Gastrocnemius medialis (tissue), 4 donors: ENCODE measurements at regions of chr7 and their contacts with region 1.

Region 1: DNA sequence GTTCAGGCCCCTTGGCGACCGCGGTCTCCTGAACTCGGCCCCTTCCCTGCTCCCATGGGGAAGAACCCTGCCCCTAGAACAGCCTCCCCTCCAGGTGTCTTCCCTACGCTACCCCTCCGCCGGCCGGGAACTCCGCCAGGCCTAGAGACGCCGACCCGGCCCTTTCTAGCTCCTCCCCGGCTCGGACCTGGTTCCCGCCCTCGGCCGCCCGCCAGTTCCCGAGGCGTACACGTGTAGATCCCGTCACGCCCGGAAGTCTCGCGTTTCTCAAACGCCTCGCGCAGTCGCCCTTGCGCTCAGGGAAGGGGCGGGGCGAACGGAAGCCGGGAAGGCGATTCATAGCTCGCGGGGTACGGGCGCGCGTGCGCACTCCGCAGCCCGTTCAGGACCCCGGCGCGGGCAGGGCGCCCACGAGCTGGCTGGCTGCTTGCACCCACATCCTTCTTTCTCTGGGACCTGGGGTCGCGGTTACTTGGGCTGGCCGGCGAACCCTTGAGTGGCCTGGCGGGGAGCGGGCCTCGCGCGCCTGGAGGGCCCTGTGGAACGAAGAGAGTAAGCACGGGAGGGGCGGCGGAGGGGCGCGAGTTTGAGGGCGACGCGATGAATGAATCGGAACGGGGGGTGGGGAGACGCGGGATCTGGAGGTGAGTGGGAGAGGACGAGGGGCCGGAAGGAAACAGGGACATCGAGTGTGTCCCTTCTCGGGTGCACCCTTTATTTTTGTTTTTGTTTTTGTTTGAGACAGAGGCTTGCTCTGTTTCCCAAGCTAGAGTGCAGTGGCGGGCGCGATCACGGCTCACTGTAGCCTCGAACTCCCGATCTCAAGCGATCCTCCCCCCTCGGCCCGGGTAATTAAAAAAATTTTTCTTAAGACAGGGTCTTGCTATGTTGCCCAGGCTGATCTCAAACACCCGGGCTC is at the start of gene POP7:
- DNase-seq: peak; percentile 97 to 98
- ATAC-seq: peak; percentile 98
- H3K4me3 ChIP-seq: peak within 1 kb of the TSS; percentile 92 to 97 (median 96)
- H3K27ac ChIP-seq: peak within 1 kb of the TSS; percentile 92 to 98 (median 93)
- H3K4me1 ChIP-seq: peaks cover 14 to 17% of the 10 kb centered on the region in 2 donors
- H3K27me3 ChIP-seq: no peaks in the 10 kb centered on the region
- CTCF ChIP-seq: no peak
- POLR2A ChIP-seq: peak; percentile 58 to 60
- total RNA-seq, gene POP7: 39.8 to 76.3 (median 63.0) TPM

Region 2: DNA sequence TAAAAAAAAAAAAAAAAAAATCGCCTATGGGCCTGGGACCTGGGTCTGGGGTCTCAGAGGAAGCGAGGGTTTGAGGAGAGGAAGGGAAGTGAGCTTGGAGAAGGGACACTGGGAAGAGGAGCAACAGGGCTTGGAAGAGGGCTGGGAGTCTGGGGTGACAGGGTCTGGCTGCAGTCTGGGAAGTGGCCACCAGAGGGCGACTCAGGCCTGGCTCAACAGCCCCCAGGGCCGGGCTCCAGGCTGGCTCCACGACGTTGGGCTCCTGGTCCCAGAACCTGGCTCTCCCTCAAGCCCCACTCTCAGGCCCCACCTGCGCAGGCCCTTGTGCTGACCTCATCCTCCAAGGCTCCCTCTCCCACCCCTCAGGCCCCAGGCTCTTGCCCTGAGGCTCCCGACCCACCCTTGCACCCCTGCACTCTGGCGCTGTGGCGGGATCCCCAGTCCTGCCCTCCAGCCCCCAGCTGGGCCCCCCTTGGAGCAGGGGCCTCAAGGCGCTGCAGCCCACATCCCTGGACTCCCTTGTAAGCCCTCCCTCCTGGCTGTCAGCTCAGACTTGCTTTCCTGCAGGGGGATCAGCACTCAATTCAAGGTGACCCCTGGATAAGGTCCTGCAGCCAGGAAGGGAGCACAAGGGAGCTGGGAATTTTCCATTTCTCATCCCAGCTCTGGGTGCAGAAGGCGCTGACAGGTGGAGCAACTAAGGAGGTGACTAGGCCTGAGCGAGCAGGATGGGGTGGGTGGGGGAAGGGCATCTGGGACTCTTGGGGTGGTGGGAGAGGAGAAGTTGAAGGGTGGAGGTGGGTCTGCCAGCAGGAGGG is 236.6 kb before region 1 on chr7:
- in situ Hi-C with region 1: loop called in 1 of 4 experiments (anchors 25 kb)
- intact Hi-C with region 1: loop called (anchors 10 kb)
- DNase-seq: peak; percentile 67 to 80
- ATAC-seq: peak; percentile 76 to 80
- H3K4me3 ChIP-seq: no peak overlapping the region
- H3K27ac ChIP-seq: peak overlapping the region in 1 of 4 donors; percentile 52
- H3K4me1 ChIP-seq: peaks cover 7 to 18% of the 10 kb centered on the region in 2 donors
- H3K27me3 ChIP-seq: no peaks in the 10 kb centered on the region
- CTCF ChIP-seq: peak; percentile 90 to 98 (median 95)
- POLR2A ChIP-seq: no peak

Region 3: DNA sequence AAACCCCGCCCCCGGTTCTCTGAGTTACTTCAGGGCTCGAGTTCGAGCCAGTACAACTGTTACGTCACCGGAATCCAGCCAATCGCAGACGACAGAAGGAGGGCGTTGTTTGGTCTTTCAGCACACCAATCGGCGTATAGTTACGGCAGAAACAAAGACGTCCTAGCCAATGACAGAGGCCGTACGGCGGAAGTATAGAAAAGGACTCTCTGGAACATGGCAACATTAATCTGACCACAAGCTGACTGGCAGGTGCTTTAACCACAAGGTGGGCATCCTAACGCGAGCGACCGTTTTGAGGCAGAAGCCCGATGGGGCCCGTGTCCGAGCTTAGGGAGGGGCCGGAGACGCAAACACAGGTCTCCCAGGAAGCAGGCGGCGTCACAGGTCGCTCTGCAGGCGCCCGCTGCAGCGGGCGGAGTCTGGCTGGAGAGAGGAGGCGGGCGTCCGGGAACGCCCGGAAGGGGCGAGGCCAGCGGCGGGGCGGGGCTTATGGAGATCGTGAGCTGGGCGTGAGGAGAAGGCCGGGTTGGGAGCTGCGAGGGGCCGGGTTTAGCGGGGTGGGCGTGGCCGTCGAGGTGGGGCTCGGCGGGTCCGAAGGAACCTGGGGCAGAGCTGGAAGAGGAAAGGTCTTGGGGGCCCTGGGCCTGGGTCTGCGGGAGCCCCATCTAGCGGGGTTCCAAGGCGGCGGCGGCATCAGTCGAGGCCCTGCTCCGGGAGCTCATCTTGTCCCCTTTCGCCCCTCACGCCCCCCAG is 93.9 kb before region 1 on chr7 and contains the start of gene MOSPD3:
- in situ Hi-C with region 1: no loop called
- intact Hi-C with region 1: loop called (anchors 5 kb)
- DNase-seq: peak; percentile 98 to 99
- ATAC-seq: peak; percentile 99 to 100
- H3K4me3 ChIP-seq: peak within 1 kb of the TSS; percentile 69 to 91 (median 76)
- H3K27ac ChIP-seq: peak within 1 kb of the TSS; percentile 90 to 99 (median 96)
- H3K4me1 ChIP-seq: peaks cover 0 to 14% of the 10 kb centered on the region in 2 donors
- H3K27me3 ChIP-seq: no peaks in the 10 kb centered on the region
- CTCF ChIP-seq: no peak
- POLR2A ChIP-seq: peak; percentile 74 to 75
- total RNA-seq, gene MOSPD3: 3.5 to 9.1 (median 4.6) TPM

Region 4: GRCh38 chr7:100691676-100692577 is 14.1 kb before region 1 on chr7:
- in situ Hi-C with region 1: no loop called
- intact Hi-C with region 1: loop called (anchors 2 kb)
- DNase-seq: peak; percentile 59 to 68
- ATAC-seq: peak; percentile 55 to 73
- H3K4me3 ChIP-seq: peak overlapping the region; percentile 37 to 89 (median 71)
- H3K27ac ChIP-seq: peak overlapping the region; percentile 69 to 84 (median 77)
- H3K4me1 ChIP-seq: peaks cover 44 to 48% of the 10 kb centered on the region in 2 donors
- H3K27me3 ChIP-seq: no peaks in the 10 kb centered on the region
- CTCF ChIP-seq: peak; percentile 78 to 93 (median 89)
- POLR2A ChIP-seq: no peak

Region 5: GRCh38 chr7:100731937-100732636 is 26.1 kb after region 1 on chr7:
- in situ Hi-C with region 1: no loop called
- intact Hi-C with region 1: no loop called
- DNase-seq: no peak
- ATAC-seq: no peak
- H3K4me3 ChIP-seq: no peak overlapping the region
- H3K27ac ChIP-seq: no peak overlapping the region
- H3K4me1 ChIP-seq: no peaks in the 10 kb centered on the region
- H3K27me3 ChIP-seq: peaks cover 0 to 5% (median 0%) of the 10 kb centered on the region in 3 donors
- CTCF ChIP-seq: no peak
- POLR2A ChIP-seq: no peak

Region 6: GRCh38 chr7:100852048-100852872 is 146.2 kb after region 1 on chr7 and contains the start of gene SLC12A9:
- in situ Hi-C with region 1: loop called in 3 of 4 experiments (anchors 10 to 25 kb)
- intact Hi-C with region 1: loop called (anchors 2 kb)
- DNase-seq: peak; percentile 70 to 76
- ATAC-seq: peak; percentile 87 to 95
- H3K4me3 ChIP-seq: peak within 1 kb of the TSS; percentile 64 to 71 (median 69)
- H3K27ac ChIP-seq: peak within 1 kb of the TSS; percentile 38 to 77 (median 58)
- H3K4me1 ChIP-seq: peaks cover 7 to 16% of the 10 kb centered on the region in 2 donors
- H3K27me3 ChIP-seq: no peaks in the 10 kb centered on the region
- CTCF ChIP-seq: peak; percentile 78 to 90 (median 84)
- POLR2A ChIP-seq: peak in 1 of 2 donors; percentile 22
- total RNA-seq, gene SLC12A9: 2.5 to 4.3 (median 3.8) TPM

Region 7: GRCh38 chr7:100874577-100875355 is 168.8 kb after region 1 on chr7 and contains the start of gene SRRT:
- in situ Hi-C with region 1: loop called in 2 of 4 experiments (anchors 10 to 25 kb)
- intact Hi-C with region 1: no loop called
- DNase-seq: peak; percentile 98
- ATAC-seq: peak; percentile 95 to 97
- H3K4me3 ChIP-seq: peak within 1 kb of the TSS; percentile 70 to 99 (median 90)
- H3K27ac ChIP-seq: peak within 1 kb of the TSS; percentile 93 to 98 (median 96)
- H3K4me1 ChIP-seq: peaks cover 34 to 42% of the 10 kb centered on the region in 2 donors
- H3K27me3 ChIP-seq: no peaks in the 10 kb centered on the region
- CTCF ChIP-seq: peak; percentile 66 to 91 (median 78)
- POLR2A ChIP-seq: peak; percentile 91 to 98
- total RNA-seq, gene SRRT: 35.0 to 47.3 (median 39.8) TPM

Region 8: DNA sequence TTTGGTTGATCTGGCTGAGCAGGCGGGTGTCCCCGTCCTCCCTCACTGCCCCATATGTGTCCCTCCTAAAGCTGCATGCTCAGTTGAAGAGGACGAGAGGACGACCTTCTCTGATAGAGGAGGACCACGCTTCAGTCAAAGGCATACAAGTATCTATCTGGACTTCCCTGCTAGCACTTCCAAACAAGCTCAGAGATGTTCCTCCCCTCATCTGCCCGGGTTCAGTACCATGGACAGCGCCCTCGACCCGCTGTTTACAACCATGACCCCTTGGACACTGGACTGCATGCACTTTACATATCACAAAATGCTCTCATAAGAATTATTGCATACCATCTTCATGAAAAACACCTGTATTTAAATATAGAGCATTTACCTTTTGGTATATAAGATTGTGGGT is 352.3 kb after region 1 on chr7:
- in situ Hi-C with region 1: no loop called
- intact Hi-C with region 1: loop called (anchors 5 kb)
- DNase-seq: peak in 1 of 2 donors; percentile 20
- ATAC-seq: peak; percentile 58
- H3K4me3 ChIP-seq: no peak overlapping the region
- H3K27ac ChIP-seq: no peak overlapping the region
- H3K4me1 ChIP-seq: no peaks in the 10 kb centered on the region
- H3K27me3 ChIP-seq: peaks cover 0 to 8% (median 5%) of the 10 kb centered on the region in 3 donors
- CTCF ChIP-seq: no peak
- POLR2A ChIP-seq: no peak